T-cell (primary cell): ENCODE measurements at regions of chr6 and their contacts with region 1.

Region 1: GRCh38 chr6:94736236-94736635 is 841.1 kb upstream of the MANEA start:
- DNase-seq: no peak
- ATAC-seq: no peak
- H3K4me3 ChIP-seq: no peak overlapping the region
- H3K4me3 Mint-ChIP-seq: no peak overlapping the region
- H3K27ac ChIP-seq: no peak overlapping the region
- H3K27ac Mint-ChIP-seq: no peak overlapping the region
- H3K4me1 ChIP-seq: no peaks in the 10 kb centered on the region
- H3K4me1 Mint-ChIP-seq: no peaks in the 10 kb centered on the region
- H3K27me3 ChIP-seq: no peaks in the 10 kb centered on the region
- H3K27me3 Mint-ChIP-seq: no peaks in the 10 kb centered on the region

Region 2: DNA sequence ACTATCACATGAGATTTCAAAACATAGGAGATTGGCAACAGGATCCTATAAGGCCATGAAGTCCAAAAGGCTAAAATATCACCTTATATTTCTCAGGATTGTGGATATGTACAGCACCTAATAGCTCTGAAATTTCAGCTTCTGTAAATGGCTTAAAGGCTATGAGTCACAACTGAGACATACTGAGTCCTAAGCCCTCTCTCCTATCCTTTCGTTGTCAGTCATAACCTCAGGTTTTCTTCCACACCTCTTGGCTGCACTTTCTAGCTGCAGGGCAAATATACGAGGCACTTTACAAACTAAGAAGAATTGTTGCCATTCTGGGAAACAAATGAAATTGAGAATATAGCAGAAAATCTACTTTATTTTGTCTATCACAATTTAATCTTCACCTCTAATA is 347.0 kb before region 1 on chr6:
- CTCF ChIA-PET with region 1: interaction called in 1 of 2 experiments, 10 read pairs
- POLR2A ChIA-PET with region 1: no interaction called
- DNase-seq: no peak
- ATAC-seq: no peak
- H3K4me3 ChIP-seq: no peak overlapping the region
- H3K4me3 Mint-ChIP-seq: no peak overlapping the region
- H3K27ac ChIP-seq: no peak overlapping the region
- H3K27ac Mint-ChIP-seq: no peak overlapping the region
- H3K4me1 ChIP-seq: no peaks in the 10 kb centered on the region
- H3K4me1 Mint-ChIP-seq: no peaks in the 10 kb centered on the region
- H3K27me3 ChIP-seq: no peaks in the 10 kb centered on the region
- H3K27me3 Mint-ChIP-seq: no peaks in the 10 kb centered on the region